A549 (cell line): ENCODE measurements at regions of chr1 and their contacts with region 1.

Region 1: DNA sequence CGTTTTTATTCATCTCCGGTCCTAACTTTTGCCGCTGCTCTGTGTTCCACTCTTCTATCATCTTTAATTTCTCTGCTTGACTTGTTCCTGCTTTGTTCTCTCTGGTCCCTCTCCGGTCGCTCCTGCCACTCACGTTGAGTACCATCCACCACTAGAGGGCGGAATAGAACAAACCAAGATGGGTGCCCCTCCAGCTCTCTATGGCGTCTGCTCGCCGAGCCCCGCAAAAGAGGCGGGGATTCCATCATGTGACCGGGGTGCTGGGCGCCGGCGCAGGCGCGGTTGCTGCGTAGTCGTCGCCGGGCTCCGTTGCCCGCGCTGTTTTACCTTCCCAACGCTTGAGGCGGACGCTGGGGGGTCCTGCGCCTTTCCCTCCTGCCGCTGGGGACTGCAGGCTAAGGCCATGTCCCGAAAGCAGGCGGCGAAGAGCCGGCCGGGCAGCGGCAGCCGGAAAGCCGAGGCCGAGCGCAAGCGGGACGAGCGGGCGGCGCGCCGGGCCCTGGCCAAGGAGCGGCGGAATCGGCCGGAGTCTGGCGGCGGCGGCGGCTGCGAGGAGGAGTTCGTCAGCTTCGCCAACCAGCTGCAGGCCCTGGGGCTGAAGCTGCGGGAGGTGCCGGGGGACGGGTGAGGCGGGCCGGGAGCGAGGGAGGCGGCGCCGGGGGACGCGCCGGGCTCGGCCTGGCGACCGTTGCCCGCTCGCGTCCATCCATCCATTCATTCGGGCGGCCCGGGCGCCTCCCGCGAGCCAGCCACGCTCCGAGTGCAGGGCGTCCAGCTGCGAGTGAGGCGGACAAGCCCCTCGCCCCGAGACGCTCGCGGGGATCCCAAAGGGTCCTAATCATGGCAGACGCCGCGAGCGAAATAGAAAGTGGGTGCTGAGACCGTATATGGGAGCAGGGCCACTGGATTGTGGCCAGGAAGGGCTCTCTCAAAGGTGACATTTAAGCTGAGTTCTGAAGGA is at the start of gene OTUD3:
- DNase-seq: peak; percentile 88 to 94
- ATAC-seq: peak; percentile 98 to 99
- H3K4me3 ChIP-seq: peak within 1 kb of the TSS; percentile 80
- H3K27ac ChIP-seq: peak within 1 kb of the TSS; percentile 83 to 100
- H3K4me1 ChIP-seq: peaks cover 11% of the 10 kb centered on the region; the same call in 2 of the 3 replicates
- CTCF ChIP-seq: peak; percentile 59
- EP300 ChIP-seq: no peak
- POLR2A ChIP-seq: peak; percentile 78
- RAD21 ChIP-seq: peak; percentile 39 to 48; a peak in 4 of 5 replicates
- polyA plus RNA-seq, gene OTUD3: 4.5 and 4.9 TPM in 2 replicates

Region 2: DNA sequence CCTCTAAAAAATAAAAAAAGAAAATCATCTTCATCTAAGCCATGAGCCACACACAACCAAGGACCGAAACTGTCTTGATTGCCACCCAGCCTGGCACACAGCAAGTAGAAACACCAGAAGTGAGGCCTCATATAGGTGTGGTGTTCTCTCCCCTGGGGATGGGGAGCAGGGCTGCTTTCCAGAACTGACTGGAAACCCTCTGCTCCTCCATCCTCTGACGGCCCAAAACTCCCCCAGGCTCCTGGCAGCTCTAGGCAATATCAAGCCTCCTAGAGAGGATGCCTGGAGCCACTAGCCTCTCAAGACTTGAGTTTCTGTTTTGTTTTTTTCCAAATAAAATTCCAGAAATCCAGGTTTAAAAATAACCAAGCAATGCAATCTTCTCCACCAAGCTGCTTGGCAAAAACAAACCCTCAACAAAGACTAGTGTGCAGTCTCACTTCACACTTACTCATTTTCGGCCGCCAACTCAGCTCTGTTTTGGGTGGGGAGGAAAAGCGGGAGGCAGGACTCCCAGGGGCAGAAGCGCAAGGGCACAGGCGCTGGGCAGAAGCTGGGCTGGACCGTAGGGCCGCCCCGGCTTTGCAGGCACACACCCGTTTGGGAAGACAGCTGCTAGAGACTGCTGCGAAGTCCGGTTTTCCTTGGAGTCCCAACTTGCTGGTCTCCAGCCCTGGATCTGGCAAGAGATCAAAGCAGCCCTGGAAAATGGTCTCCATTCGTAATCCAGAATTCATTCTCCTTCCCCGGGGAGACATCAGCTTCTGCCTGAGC is 318.9 kb before region 1 on chr1:
- CTCF ChIA-PET with region 1: no interaction called
- POLR2A ChIA-PET with region 1: no interaction called
- DNase-seq: no peak
- ATAC-seq: no peak
- H3K4me3 ChIP-seq: no peak overlapping the region
- H3K27ac ChIP-seq: no peak overlapping the region
- H3K4me1 ChIP-seq: no peaks in the 10 kb centered on the region
- CTCF ChIP-seq: no peak
- EP300 ChIP-seq: no peak
- POLR2A ChIP-seq: no peak
- RAD21 ChIP-seq: no peak

Region 3: GRCh38 chr1:19723834-19724233 is 158.6 kb before region 1 on chr1:
- CTCF ChIA-PET with region 1: no interaction called
- POLR2A ChIA-PET with region 1: no interaction called
- DNase-seq: no peak
- ATAC-seq: no peak
- H3K4me3 ChIP-seq: no peak overlapping the region
- H3K27ac ChIP-seq: no peak overlapping the region
- H3K4me1 ChIP-seq: no peaks in the 10 kb centered on the region
- CTCF ChIP-seq: no peak
- EP300 ChIP-seq: no peak
- POLR2A ChIP-seq: no peak
- RAD21 ChIP-seq: no peak

Region 4: GRCh38 chr1:19892628-19893168 is 10.3 kb after region 1 on chr1:
- CTCF ChIA-PET with region 1: interaction called, 27 read pairs
- POLR2A ChIA-PET with region 1: interaction called, 10 read pairs
- DNase-seq: no peak
- ATAC-seq: no peak
- H3K4me3 ChIP-seq: no peak overlapping the region
- H3K27ac ChIP-seq: peak overlapping the region in 1 of 2 experiments; percentile 53; a peak in 1 of 6 replicates
- H3K4me1 ChIP-seq: peaks cover 19% of the 10 kb centered on the region; the same call in 2 of the 3 replicates
- CTCF ChIP-seq: no peak
- EP300 ChIP-seq: no peak
- POLR2A ChIP-seq: no peak
- RAD21 ChIP-seq: no peak